ENCODE measurements at regions of chr9 and their contacts with region 1.

Region 1: DNA sequence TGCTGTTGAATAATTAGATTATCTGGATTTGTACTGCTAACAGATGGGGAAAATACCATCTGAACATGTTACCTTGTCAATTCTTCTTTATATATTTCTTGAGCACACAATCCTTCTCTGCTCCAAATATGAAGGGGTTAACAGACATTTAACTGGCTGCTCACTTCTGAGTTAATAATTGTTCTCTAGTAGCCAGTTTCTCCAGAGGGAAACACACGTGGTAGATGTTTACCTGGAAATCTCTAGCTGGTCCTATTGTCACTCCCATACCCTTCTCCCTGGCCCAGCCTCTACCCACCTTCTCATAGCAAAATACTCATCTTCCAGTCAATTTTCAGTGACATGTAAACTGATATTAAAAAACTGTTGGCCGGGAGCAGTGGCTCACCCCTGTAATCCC is 101.5 kb upstream of the ZNF462 start:
- DNase-seq: no peak
- ATAC-seq: no peak
- H3K4me3 ChIP-seq: no peak overlapping the region
- H3K4me3 Mint-ChIP-seq: no peak overlapping the region
- H3K27ac ChIP-seq: no peak overlapping the region
- H3K27ac Mint-ChIP-seq: no peak overlapping the region
- H3K4me1 ChIP-seq: no peaks in the 10 kb centered on the region
- H3K4me1 Mint-ChIP-seq: peaks cover 0 to 7% of the 10 kb centered on the region in 2 donors
- H3K27me3 ChIP-seq: no peaks in the 10 kb centered on the region
- H3K27me3 Mint-ChIP-seq: peaks cover 2 to 10% of the 10 kb centered on the region in 2 donors
- CTCF ChIP-seq: no peak

Region 2: GRCh38 chr9:106075960-106076327 is 685.5 kb before region 1 on chr9:
- intact Hi-C with region 1: loop called (anchors 10 kb)
- DNase-seq: no peak
- ATAC-seq: no peak
- H3K4me3 ChIP-seq: no peak overlapping the region
- H3K4me3 Mint-ChIP-seq: no peak overlapping the region
- H3K27ac ChIP-seq: no peak overlapping the region
- H3K27ac Mint-ChIP-seq: no peak overlapping the region
- H3K4me1 ChIP-seq: no peaks in the 10 kb centered on the region
- H3K4me1 Mint-ChIP-seq: peaks cover 0 to under 1% of the 10 kb centered on the region in 2 donors
- H3K27me3 ChIP-seq: no peaks in the 10 kb centered on the region
- H3K27me3 Mint-ChIP-seq: peaks cover 7 to 10% of the 10 kb centered on the region in 2 donors
- CTCF ChIP-seq: no peak

Measured in natural killer cell (primary cell).